ENCODE measurements at regions of chr10 and their contacts with region 1.

Region 1: DNA sequence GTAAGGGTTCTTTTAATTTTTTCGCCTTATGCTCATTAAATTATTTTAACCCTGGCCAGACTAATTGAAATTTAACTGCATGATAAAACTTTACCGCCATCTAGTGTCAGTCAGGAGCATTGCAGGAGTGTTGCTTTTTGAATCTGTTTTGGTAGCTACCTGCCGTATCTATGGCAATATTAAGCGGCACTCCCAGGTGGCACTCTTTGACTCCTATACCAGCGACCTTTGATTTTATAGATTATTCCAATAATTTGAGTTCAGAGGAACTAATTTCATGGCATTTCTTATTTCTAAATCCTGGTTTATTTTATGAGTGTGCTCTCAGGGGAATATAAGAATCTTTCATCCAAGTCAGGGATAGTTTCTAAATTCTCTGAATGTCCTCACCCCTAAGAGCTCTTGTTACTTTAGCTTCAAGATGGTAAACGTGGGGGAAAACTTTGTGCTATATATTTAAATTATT is 198.9 kb downstream of the REEP3 start:
- DNase-seq: peak; percentile 65
- ATAC-seq: peak; percentile 62
- H3K4me3 Mint-ChIP-seq: peak overlapping the region; percentile 12
- H3K27ac Mint-ChIP-seq: no peak overlapping the region
- H3K4me1 Mint-ChIP-seq: peaks cover 16% of the 10 kb centered on the region
- H3K27me3 Mint-ChIP-seq: peaks cover 3% of the 10 kb centered on the region

Region 2: DNA sequence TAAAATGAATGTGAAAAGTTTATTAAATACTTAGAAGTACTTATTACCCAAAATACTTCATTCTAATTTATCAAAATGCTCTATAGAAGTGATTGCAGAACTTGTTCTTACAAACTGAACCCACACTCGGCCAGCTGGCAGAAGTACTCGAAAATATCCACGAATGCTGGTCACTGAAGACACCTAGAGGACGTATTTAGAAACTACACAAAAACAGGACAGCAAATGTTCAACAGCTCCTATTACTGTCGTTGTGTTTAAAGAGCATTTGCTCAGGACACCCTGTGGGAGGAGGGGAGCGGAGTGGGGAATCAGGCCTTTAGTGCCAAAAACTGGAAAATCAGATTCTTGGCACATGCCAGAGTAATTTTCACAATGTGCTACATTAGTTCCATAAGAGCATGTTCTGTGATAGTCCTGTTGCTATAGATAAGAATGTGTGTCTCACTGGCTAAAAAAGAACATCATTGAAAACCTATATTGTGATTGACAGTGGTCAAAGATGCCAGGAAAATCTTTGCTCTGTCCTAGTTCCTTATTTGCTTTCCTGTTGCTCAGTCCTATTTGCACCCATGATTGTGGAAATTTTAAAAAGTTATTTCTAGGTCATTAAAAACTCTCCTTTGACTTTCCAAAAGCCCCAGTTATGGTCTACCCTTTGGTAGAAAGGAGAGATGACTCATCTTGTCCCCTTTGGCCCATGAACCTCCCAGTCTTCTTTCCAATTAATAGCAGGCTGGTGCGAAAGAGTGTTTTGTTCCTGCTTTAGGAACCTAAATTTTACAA is 636.0 kb before region 1 on chr10:
- CTCF ChIA-PET with region 1: interaction called, 13 read pairs
- POLR2A ChIA-PET with region 1: no interaction called
- DNase-seq: peak; percentile 48
- ATAC-seq: peak; percentile 74
- H3K4me3 Mint-ChIP-seq: no peak overlapping the region
- H3K27ac Mint-ChIP-seq: no peak overlapping the region
- H3K4me1 Mint-ChIP-seq: no peaks in the 10 kb centered on the region
- H3K27me3 Mint-ChIP-seq: peaks cover 12% of the 10 kb centered on the region

Region 3: DNA sequence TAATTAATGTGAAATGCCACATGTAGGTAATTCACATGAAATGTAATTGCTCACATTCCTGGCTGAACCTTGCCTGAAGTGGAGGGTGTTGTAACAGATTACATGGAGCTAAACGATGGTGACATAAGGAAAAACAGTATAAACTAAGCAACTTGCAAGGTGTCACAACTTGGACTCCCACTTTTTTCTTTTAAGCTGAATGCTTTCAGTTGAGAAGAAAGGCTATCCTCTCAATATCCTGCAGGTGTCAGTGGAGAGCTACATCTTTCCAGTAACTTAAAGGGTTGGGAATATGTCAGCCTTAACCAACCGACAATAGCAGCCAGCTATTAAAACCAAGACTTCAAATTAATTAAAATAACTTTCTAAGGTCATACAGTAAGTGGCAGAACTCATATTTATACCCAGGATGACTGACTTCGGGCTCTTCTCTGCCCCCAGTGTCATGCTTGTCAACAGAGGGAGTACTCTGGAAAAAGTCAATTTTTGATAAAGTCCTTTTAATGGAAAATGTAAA is 553.3 kb before region 1 on chr10:
- CTCF ChIA-PET with region 1: interaction called, 234 read pairs
- POLR2A ChIA-PET with region 1: interaction called, 3 read pairs
- DNase-seq: peak; percentile 57
- ATAC-seq: peak; percentile 45
- H3K4me3 Mint-ChIP-seq: no peak overlapping the region
- H3K27ac Mint-ChIP-seq: no peak overlapping the region
- H3K4me1 Mint-ChIP-seq: peaks cover 43% of the 10 kb centered on the region
- H3K27me3 Mint-ChIP-seq: no peaks in the 10 kb centered on the region

Region 4: GRCh38 chr10:63206997-63207811 is 512.9 kb before region 1 on chr10:
- CTCF ChIA-PET with region 1: interaction called, 13 read pairs
- POLR2A ChIA-PET with region 1: no interaction called
- DNase-seq: no peak
- ATAC-seq: peak; percentile 48
- H3K4me3 Mint-ChIP-seq: peak overlapping the region; percentile 38
- H3K27ac Mint-ChIP-seq: peak overlapping the region; percentile 75
- H3K4me1 Mint-ChIP-seq: peaks cover 65% of the 10 kb centered on the region
- H3K27me3 Mint-ChIP-seq: no peaks in the 10 kb centered on the region

Region 5: GRCh38 chr10:63227207-63227915 is 492.7 kb before region 1 on chr10:
- CTCF ChIA-PET with region 1: interaction called, 12 read pairs
- POLR2A ChIA-PET with region 1: no interaction called
- DNase-seq: no peak
- ATAC-seq: peak; percentile 49
- H3K4me3 Mint-ChIP-seq: peak overlapping the region; percentile 42
- H3K27ac Mint-ChIP-seq: peak overlapping the region; percentile 82
- H3K4me1 Mint-ChIP-seq: peaks cover 47% of the 10 kb centered on the region
- H3K27me3 Mint-ChIP-seq: no peaks in the 10 kb centered on the region

Region 6: GRCh38 chr10:63521416-63522276 is 198.5 kb before region 1 on chr10:
- CTCF ChIA-PET with region 1: interaction called, 13 read pairs
- POLR2A ChIA-PET with region 1: no interaction called
- DNase-seq: peak; percentile 56
- ATAC-seq: peak; percentile 77
- H3K4me3 Mint-ChIP-seq: peak overlapping the region; percentile 87
- H3K27ac Mint-ChIP-seq: peak overlapping the region; percentile 91
- H3K4me1 Mint-ChIP-seq: peaks cover 61% of the 10 kb centered on the region
- H3K27me3 Mint-ChIP-seq: no peaks in the 10 kb centered on the region

Region 7: GRCh38 chr10:63707254-63707910 is 12.7 kb before region 1 on chr10:
- CTCF ChIA-PET with region 1: interaction called, 23 read pairs
- POLR2A ChIA-PET with region 1: no interaction called
- DNase-seq: no peak
- ATAC-seq: peak; percentile 58
- H3K4me3 Mint-ChIP-seq: no peak overlapping the region
- H3K27ac Mint-ChIP-seq: no peak overlapping the region
- H3K4me1 Mint-ChIP-seq: peaks cover 9% of the 10 kb centered on the region
- H3K27me3 Mint-ChIP-seq: no peaks in the 10 kb centered on the region

Measured in activated CD8-positive, alpha-beta T cell treated with anti-CD3 and anti-CD28 coated beads, Interleukin-2, amount 10 ng/mL, durations not matched to agents 7 days and 5 days (primary cell).